ENCODE measurements at regions of chr12 and their contacts with region 1.

Region 1: GRCh38 chr12:56315622-56316473 is at the start of gene CNPY2:
- DNase-seq: peak; percentile 87 to 96
- ATAC-seq: peak; percentile 89 to 96 (median 89)
- H3K4me3 ChIP-seq: peak within 1 kb of the TSS; percentile 96
- H3K4me3 Mint-ChIP-seq: peak within 1 kb of the TSS; percentile 98
- H3K27ac ChIP-seq: peak within 1 kb of the TSS; percentile 98
- H3K27ac Mint-ChIP-seq: peak within 1 kb of the TSS; percentile 97 to 99
- H3K4me1 ChIP-seq: peaks cover 15% of the 10 kb centered on the region
- H3K4me1 Mint-ChIP-seq: peaks cover 0 to 17% of the 10 kb centered on the region in 2 donors
- H3K27me3 ChIP-seq: no peaks in the 10 kb centered on the region
- H3K27me3 Mint-ChIP-seq: no peaks in the 10 kb centered on the region
- CTCF ChIP-seq: no peak
- total RNA-seq, gene CNPY2: 50.4 to 64.3 (median 60.8) TPM

Region 2: GRCh38 chr12:55817346-55818139 is 498.3 kb before region 1 on chr12 and contains the starts of genes ORMDL2 and SARNP:
- intact Hi-C with region 1: loop called (anchors 5 kb)
- DNase-seq: peak; percentile 88 to 99
- ATAC-seq: peak; percentile 91 to 97 (median 92)
- H3K4me3 ChIP-seq: peak within 1 kb of the TSS; percentile 85
- H3K4me3 Mint-ChIP-seq: no peak within 1 kb of the TSS
- H3K27ac ChIP-seq: peak within 1 kb of the TSS; percentile 78
- H3K27ac Mint-ChIP-seq: no peak within 1 kb of the TSS
- H3K4me1 ChIP-seq: peaks cover 22% of the 10 kb centered on the region
- H3K4me1 Mint-ChIP-seq: peaks cover 22 to 29% of the 10 kb centered on the region in 2 donors
- H3K27me3 ChIP-seq: no peaks in the 10 kb centered on the region
- H3K27me3 Mint-ChIP-seq: no peaks in the 10 kb centered on the region
- CTCF ChIP-seq: no peak
- total RNA-seq, gene ORMDL2: 21.3 to 36.3 (median 23.1) TPM
- total RNA-seq, gene SARNP: 50.5 to 57.0 (median 51.2) TPM

Region 3: DNA sequence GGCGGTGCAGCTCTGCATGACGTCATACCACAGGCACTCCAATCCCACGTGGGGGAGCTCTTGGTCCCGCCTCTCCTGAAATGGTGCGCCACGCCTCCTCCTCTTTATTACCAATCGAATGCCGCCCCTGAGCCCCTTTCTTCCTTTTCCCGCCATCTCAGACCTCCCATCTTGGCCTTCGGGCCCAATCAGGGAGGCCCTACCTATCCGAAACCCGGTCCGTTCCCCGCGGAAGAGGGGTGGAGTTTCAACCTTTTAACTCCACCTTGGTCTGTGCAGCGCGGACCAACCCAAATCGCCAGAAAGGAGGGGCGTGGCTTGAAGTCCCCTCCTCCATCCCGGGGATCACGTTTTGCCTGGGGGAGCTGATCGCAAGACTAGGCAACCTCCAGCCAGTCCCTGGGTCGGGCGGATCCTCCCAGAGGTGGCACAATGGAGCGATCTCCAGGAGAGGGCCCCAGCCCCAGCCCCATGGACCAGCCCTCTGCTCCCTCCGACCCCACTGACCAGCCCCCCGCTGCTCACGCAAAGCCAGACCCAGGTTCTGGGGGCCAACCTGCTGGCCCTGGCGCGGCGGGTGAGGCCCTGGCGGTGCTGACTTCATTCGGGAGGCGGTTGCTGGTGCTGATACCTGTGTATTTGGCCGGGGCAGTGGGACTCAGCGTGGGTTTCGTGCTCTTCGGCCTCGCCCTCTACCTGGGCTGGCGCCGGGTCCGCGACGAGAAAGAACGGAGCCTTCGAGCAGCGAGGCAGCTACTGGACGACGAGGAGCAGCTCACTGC is 187.8 kb before region 1 on chr12 and contains the start of gene ESYT1:
- intact Hi-C with region 1: loop called (anchors 5 kb)
- DNase-seq: peak; percentile 91 to 100
- ATAC-seq: peak; percentile 87 to 96 (median 90)
- H3K4me3 ChIP-seq: peak within 1 kb of the TSS; percentile 90
- H3K4me3 Mint-ChIP-seq: peak within 1 kb of the TSS; percentile 97
- H3K27ac ChIP-seq: peak within 1 kb of the TSS; percentile 85
- H3K27ac Mint-ChIP-seq: peak within 1 kb of the TSS; percentile 88 to 93
- H3K4me1 ChIP-seq: peaks cover 45% of the 10 kb centered on the region
- H3K4me1 Mint-ChIP-seq: peaks cover 52 to 68% of the 10 kb centered on the region in 2 donors
- H3K27me3 ChIP-seq: no peaks in the 10 kb centered on the region
- H3K27me3 Mint-ChIP-seq: no peaks in the 10 kb centered on the region
- CTCF ChIP-seq: no peak
- total RNA-seq, gene ESYT1: 198 to 215 (median 199) TPM

Region 4: DNA sequence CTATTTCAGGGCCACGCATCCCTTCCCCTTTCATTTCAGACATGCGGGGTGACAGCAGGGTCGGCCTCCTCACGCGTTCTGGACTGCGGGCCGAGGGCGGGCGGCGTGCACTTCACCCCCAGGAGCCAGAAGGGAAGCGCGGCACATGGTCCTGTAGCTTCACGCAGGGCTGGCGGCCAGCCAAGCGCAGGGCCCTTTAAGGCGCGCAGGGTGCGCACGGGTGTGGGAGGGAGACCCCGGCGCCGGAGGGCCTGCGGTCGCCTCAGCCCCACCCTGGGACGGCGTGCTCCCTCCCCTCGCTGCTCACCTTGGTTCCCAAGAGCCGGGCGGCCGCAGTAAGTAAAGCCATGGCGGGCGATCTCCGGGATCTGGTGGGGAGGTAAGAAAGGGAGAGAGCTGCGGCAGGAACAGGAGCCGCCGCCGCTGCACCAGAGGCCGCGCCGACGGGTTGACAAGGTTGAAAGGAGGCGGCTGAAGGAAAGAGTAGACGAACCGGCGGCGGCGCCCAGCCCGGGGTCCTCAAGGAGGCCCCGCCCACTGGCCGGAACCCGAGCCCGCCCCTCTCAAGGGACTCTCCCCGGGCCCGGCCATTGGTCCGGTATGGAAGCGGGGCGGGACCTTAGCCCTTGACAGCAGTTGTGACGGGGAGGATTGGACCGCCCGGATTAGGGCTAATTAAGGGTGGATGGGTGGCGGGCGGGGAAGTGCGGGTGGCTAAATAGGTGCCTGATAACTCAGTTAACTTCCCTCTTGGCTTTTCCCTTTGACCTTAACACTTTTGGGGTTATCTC is 15.8 kb before region 1 on chr12 and contains the start of gene CS:
- intact Hi-C with region 1: loop called (anchors 1 kb)
- DNase-seq: peak; percentile 98 to 99
- ATAC-seq: peak; percentile 95 to 99 (median 96)
- H3K4me3 ChIP-seq: peak within 1 kb of the TSS; percentile 72
- H3K4me3 Mint-ChIP-seq: peak within 1 kb of the TSS; percentile 93
- H3K27ac ChIP-seq: peak within 1 kb of the TSS; percentile 88
- H3K27ac Mint-ChIP-seq: peak within 1 kb of the TSS; percentile 97 to 98
- H3K4me1 ChIP-seq: peaks cover 34% of the 10 kb centered on the region
- H3K4me1 Mint-ChIP-seq: peaks cover 55 to 56% of the 10 kb centered on the region in 2 donors
- H3K27me3 ChIP-seq: no peaks in the 10 kb centered on the region
- H3K27me3 Mint-ChIP-seq: no peaks in the 10 kb centered on the region
- CTCF ChIP-seq: no peak
- total RNA-seq, gene CS: 185 to 190 (median 188) TPM

Region 5: GRCh38 chr12:56333679-56334489 is 18.0 kb after region 1 on chr12 and contains the start of gene PAN2:
- intact Hi-C with region 1: loop called (anchors 1 kb)
- DNase-seq: peak; percentile 92 to 97
- ATAC-seq: peak; percentile 91 to 96 (median 96)
- H3K4me3 ChIP-seq: peak within 1 kb of the TSS; percentile 77
- H3K4me3 Mint-ChIP-seq: peak within 1 kb of the TSS; percentile 93
- H3K27ac ChIP-seq: peak within 1 kb of the TSS; percentile 99
- H3K27ac Mint-ChIP-seq: peak within 1 kb of the TSS; percentile 99
- H3K4me1 ChIP-seq: peaks cover 31% of the 10 kb centered on the region
- H3K4me1 Mint-ChIP-seq: peaks cover 19 to 34% of the 10 kb centered on the region in 2 donors
- H3K27me3 ChIP-seq: no peaks in the 10 kb centered on the region
- H3K27me3 Mint-ChIP-seq: no peaks in the 10 kb centered on the region
- CTCF ChIP-seq: peak; percentile 58
- total RNA-seq, gene PAN2: 86.2 to 117 (median 95.7) TPM

Region 6: DNA sequence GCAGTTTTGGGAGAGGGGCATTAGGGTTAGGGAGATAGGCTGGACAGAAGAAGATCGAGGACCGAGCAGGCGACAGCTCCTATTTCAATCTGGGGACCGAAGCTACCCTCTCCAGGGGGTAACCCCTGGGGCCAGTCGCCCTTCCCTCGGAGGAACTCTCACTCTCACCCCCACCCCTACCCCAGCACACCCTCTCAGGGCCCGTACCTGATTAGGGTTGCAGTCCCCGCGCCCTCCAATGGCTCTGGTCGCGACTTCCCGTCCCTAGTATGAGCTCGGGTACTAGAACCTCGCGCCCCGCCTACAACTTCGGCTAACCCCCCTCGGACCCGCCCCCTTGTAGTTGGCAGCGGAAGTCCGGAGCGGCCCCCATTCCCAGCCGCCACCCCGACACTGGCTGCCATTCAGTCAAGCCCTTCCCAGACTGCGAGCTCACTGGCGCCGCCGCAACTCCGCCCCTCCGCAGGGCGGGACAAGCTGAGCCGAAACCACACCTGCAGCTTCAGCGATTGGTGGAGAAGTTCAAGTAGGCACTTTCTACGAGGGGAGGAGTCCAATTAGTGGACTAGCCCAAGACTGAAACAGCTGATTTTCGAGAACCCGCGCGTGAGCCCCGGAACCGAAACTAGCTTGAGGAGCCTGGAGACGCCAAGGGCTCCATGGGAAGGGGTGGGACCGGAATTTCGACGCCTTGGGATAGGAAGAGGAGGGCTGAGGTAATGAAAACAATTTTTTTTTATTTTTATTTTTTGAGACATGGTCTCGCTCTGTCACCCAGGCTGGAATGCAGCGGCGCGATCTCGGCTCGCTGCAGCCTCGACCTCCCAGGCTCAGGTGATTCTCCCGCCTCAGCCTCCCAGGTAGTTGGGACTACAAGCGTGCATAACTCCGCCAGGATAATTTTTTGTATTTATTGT is 44.3 kb after region 1 on chr12 and contains the start of gene STAT2:
- intact Hi-C with region 1: loop called (anchors 1 kb)
- DNase-seq: peak; percentile 98 to 99
- ATAC-seq: peak; percentile 93 to 98 (median 94)
- H3K4me3 ChIP-seq: peak within 1 kb of the TSS; percentile 80
- H3K4me3 Mint-ChIP-seq: peak within 1 kb of the TSS; percentile 97
- H3K27ac ChIP-seq: peak within 1 kb of the TSS; percentile 71
- H3K27ac Mint-ChIP-seq: peak within 1 kb of the TSS; percentile 88 to 91
- H3K4me1 ChIP-seq: peaks cover 17% of the 10 kb centered on the region
- H3K4me1 Mint-ChIP-seq: peaks cover 21 to 24% of the 10 kb centered on the region in 2 donors
- H3K27me3 ChIP-seq: no peaks in the 10 kb centered on the region
- H3K27me3 Mint-ChIP-seq: no peaks in the 10 kb centered on the region
- CTCF ChIP-seq: no peak
- total RNA-seq, gene STAT2: 140 to 157 (median 143) TPM

Region 7: DNA sequence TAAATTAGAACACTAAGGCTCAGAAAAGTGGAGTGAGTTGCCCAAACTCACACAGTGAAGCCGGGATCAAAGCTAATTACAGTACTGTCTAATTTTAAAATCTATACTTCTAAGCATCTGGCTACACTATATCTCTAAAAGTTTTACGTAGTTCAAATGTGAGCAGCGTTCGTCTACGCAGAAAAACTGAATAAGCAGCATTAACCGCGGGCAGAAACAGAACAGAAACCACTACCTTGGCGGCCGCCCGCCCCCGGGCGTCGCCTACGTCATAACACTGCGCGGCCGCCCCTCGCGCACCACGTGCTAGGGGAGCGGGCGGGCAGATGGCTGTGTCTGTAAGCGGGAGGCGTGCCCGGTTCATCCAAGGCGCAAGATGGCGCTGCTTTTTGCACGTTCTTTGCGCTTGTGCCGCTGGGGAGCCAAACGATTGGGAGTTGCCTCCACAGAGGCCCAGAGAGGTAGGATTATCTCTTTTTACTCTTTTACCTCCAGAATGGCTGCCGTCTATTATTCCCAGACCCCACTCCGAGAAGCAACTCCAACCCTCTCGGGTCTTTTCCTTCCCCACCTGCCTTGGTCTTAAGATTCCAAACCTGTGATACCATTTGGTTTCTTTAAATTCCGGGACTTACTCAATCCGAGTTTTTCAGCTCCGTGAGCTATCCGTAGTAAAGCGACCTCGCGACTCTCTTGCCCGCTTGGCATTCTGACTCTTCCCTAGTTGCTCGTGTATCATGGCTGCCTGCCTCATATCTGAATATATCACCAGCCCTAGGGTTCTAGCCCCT is 152.6 kb after region 1 on chr12 and contains the start of gene SPRYD4:
- intact Hi-C with region 1: loop called (anchors 5 kb)
- DNase-seq: peak; percentile 93 to 97
- ATAC-seq: peak; percentile 91 to 98 (median 97)
- H3K4me3 ChIP-seq: peak within 1 kb of the TSS; percentile 80
- H3K4me3 Mint-ChIP-seq: peak within 1 kb of the TSS; percentile 95
- H3K27ac ChIP-seq: peak within 1 kb of the TSS; percentile 92
- H3K27ac Mint-ChIP-seq: peak within 1 kb of the TSS; percentile 94
- H3K4me1 ChIP-seq: peaks cover 20% of the 10 kb centered on the region
- H3K4me1 Mint-ChIP-seq: peaks cover 22 to 25% of the 10 kb centered on the region in 2 donors
- H3K27me3 ChIP-seq: no peaks in the 10 kb centered on the region
- H3K27me3 Mint-ChIP-seq: no peaks in the 10 kb centered on the region
- CTCF ChIP-seq: no peak
- total RNA-seq, gene SPRYD4: 5.6 to 6.2 (median 5.6) TPM

Measured in natural killer cell (primary cell).